ENCODE measurements at regions of chr17 and their contacts with region 1.

Region 1: DNA sequence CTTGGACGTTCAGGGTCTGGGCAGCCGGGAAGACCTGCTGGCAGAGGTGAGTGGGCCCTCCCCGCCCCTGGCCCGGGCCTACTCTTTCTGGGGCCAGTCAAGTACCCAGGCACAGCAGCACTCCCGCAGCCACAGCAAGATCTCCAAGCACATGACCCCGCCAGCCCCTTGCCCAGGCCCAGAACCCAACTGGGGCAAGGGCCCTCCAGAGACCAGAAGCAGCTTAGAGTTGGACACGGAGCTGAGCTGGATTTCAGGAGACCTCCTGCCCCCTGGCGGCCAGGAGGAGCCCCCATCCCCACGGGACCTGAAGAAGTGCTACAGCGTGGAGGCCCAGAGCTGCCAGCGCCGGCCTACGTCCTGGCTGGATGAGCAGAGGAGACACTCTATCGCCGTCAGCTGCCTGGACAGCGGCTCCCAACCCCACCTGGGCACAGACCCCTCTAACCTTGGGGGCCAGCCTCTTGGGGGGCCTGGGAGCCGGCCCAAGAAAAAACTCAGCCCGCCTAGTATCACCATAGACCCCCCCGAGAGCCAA is 8.6 kb upstream of the ABCC3 start:
- DNase-seq: peak; percentile 79 to 90 (median 86)
- H3K4me3 ChIP-seq: no peak overlapping the region
- H3K27ac ChIP-seq: no peak overlapping the region
- H3K4me1 ChIP-seq: peaks cover 0 to 18% (median 12%) of the 10 kb centered on the region in 4 experiments
- H3K27me3 ChIP-seq: peaks cover 0 to 30% (median 10%) of the 10 kb centered on the region in 5 experiments

Region 2: GRCh38 chr17:50297407-50297865 is 328.7 kb before region 1 on chr17:
- CTCF ChIA-PET with region 1: no interaction called
- POLR2A ChIA-PET with region 1: no interaction called
- DNase-seq: peak; percentile 67 to 81 (median 77)
- H3K4me3 ChIP-seq: no peak overlapping the region
- H3K27ac ChIP-seq: no peak overlapping the region
- H3K4me1 ChIP-seq: peaks cover 0 to 10% (median under 1%) of the 10 kb centered on the region in 4 experiments
- H3K27me3 ChIP-seq: no peaks in the 10 kb centered on the region

Region 3: DNA sequence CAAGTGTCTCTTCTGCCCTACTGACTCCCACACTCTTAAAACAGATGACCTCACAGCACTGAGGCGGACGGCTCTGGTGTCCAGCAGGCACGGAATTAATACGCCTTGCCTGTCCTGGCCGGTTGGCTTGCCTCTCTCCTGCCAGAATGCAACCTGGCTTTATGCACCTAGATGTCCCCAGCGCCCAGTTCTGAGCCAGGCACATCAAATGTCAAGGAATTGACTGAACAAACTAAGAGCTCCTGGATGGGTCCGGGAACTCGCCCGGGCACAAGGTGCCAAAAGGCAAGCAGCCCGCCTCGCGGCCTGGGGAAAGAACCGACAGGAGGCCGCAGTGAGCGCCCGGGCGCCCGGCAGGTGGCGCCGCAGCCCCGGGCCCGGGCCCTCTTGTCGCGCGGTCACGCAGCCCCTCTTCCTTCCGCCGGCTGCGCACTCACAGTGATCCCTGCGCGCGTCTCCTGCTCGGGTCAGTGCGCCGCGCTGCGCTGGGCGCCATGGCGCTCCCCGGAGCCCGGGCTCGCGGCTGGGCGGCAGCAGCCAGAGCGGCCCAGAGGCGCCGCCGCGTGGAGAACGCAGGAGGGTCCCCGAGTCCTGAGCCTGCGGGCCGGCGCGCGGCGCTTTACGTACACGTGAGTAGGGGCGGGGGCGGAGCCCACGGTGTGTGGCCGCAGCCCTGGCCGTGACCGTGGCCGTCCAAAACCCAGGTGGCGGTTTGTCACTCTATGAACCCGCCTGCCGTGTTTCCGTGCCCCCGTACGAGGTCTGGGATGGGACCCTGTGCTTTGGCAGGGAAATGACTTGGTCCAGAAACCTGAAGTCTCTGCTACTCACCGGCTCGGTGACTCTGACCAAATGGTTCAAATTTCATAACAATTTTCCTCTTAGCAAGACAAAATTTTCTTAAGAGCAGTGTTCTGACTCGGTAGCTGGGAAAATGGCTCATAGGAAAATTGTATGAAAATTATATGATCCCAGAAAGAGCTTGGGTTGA is 147.4 kb before region 1 on chr17 and contains the start of gene RSAD1:
- CTCF ChIA-PET with region 1: interaction called, 18 read pairs
- POLR2A ChIA-PET with region 1: no interaction called
- DNase-seq: peak; percentile 93 to 96 (median 95)
- H3K4me3 ChIP-seq: peak within 1 kb of the TSS; percentile 86 to 94 (median 90)
- H3K27ac ChIP-seq: peak within 1 kb of the TSS; percentile 7 to 85
- H3K4me1 ChIP-seq: peaks cover 0 to 21% (median 18%) of the 10 kb centered on the region in 4 experiments
- H3K27me3 ChIP-seq: peaks cover 0 to 4% (median 0%) of the 10 kb centered on the region in 5 experiments

Region 4: DNA sequence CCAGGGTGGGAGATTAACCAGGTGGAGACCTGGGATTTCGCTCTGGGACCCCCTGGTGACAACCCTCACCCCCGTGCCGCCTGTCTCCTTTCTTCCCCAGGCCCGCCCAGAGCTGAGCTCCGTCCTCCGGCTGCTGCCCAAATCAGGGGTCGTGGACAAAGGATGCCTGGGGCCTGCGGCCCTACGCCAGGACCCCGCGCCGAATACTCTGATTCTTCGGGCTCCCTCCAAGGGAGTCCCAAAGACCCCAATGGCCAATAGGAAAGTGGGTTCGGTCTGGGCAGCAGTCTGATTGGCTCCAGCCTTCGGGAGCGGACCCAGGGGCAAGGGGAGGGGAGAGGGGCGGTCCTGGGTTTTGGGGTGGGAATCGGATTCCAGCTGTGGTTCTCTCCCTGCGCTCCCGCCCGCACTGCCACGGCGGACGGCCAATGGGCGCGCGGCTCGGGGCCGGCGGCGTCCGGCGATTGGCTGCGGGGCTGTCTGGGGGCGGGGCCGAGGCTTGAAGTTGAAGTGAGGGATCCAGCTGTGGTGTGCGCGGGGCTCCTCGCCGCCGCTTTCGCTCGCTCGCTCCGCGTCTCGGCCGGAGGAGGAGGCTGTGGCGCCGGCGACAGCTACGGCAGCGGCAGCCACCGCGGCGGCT is 65.8 kb before region 1 on chr17 and contains the start of gene CACNA1G:
- CTCF ChIA-PET with region 1: interaction called, 325 read pairs
- POLR2A ChIA-PET with region 1: no interaction called
- DNase-seq: peak; percentile 82 to 89 (median 86)
- H3K4me3 ChIP-seq: peak within 1 kb of the TSS in 6 of 7 experiments; percentile 28 to 72 (median 47)
- H3K27ac ChIP-seq: no peak within 1 kb of the TSS
- H3K4me1 ChIP-seq: peaks cover 0 to 44% (median 38%) of the 10 kb centered on the region in 4 experiments
- H3K27me3 ChIP-seq: peaks cover 0 to 83% (median 39%) of the 10 kb centered on the region in 5 experiments

Region 5: DNA sequence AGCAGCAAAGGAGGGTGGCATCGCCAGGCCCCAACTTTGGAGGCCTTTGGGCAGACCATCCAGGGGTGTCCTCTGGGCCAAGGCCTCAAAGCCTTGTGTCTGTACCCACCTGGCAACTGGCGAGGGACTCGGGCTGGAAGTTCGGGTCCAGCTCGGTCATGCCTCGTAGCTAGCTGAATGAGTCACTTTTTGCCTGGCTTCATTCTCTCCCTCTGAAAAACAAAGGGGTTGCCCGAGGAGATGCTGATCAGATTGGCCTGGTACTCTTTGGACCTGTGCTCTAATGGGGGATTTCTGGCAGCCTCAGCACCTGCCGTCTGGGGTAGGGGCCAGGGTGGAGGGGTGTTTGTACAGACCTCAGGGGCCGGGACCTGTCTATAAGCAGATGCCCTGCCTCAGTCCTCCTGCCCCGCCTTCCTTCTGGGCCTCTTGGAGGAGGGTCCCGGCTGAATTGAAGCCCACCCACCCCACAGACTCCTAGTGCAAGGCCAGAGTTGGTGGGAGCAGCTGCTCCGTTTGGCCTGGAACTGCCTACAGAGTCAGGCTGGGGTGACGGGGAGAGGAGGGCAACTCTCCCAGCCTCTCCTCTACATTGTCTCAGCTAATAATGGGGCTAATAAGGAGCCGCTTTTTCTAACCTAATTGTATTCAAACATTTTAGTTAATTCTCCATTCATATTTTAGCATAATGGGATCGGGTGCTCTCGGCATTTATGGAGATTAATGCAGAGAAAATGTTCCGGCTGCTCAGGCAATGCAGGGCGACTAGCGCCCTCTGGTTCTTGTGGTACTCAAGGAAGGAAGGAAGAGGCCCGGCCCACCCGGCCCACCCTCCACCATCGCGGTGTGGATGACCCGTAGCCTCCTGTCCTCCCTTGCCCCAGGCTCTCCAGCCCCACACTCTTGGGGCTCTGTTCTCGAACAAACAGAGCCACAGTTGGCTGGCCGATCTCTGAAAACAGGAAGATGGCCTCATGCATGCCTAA is 12.8 kb before region 1 on chr17:
- CTCF ChIA-PET with region 1: interaction called, 26 read pairs
- POLR2A ChIA-PET with region 1: no interaction called
- DNase-seq: peak in 2 of 3 donors; percentile 37 to 39
- H3K4me3 ChIP-seq: peak overlapping the region in 2 of 7 experiments; percentile 13 to 39
- H3K27ac ChIP-seq: no peak overlapping the region
- H3K4me1 ChIP-seq: peaks cover 0 to 21% (median 16%) of the 10 kb centered on the region in 4 experiments
- H3K27me3 ChIP-seq: peaks cover 0 to 2% (median 0%) of the 10 kb centered on the region in 5 experiments

Region 6: DNA sequence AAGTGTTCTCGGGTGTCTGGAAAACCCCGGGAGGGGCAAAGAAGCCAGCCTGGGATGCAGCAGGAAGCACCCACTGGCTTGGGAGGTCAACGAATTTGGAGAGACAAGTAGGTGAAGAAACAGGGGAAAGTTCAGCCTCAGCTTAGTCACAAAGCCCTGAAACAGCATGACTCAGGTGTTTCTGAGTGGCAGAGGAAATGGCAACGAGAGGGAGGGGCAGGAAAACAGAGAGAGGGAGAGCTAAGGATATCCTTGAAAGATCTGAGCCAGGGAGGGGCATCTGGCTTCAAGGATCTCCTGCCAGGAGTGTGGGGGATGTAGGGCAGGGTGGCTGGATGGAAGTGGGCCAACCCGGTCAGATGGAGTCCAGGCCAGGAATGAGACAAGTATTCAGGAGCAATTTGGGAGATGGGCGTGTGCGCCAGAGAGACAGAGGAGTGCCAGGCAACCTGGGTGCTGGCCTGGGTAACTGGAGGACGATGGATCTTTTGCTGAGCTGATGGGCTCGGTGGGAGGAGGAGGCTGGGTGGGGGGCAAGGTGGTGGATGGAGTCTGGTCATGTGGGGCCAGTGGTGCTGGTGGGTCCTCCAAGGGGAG is 35.8 kb after region 1 on chr17:
- CTCF ChIA-PET with region 1: interaction called, 18 read pairs
- POLR2A ChIA-PET with region 1: no interaction called
- DNase-seq: peak; percentile 72 to 89 (median 88)
- H3K4me3 ChIP-seq: peak overlapping the region in 3 of 7 experiments; percentile 0 to 45 (median 26)
- H3K27ac ChIP-seq: peak overlapping the region in 1 of 2 experiments; percentile 52
- H3K4me1 ChIP-seq: peaks cover 0 to 48% (median 26%) of the 10 kb centered on the region in 4 experiments
- H3K27me3 ChIP-seq: no peaks in the 10 kb centered on the region

Region 7: DNA sequence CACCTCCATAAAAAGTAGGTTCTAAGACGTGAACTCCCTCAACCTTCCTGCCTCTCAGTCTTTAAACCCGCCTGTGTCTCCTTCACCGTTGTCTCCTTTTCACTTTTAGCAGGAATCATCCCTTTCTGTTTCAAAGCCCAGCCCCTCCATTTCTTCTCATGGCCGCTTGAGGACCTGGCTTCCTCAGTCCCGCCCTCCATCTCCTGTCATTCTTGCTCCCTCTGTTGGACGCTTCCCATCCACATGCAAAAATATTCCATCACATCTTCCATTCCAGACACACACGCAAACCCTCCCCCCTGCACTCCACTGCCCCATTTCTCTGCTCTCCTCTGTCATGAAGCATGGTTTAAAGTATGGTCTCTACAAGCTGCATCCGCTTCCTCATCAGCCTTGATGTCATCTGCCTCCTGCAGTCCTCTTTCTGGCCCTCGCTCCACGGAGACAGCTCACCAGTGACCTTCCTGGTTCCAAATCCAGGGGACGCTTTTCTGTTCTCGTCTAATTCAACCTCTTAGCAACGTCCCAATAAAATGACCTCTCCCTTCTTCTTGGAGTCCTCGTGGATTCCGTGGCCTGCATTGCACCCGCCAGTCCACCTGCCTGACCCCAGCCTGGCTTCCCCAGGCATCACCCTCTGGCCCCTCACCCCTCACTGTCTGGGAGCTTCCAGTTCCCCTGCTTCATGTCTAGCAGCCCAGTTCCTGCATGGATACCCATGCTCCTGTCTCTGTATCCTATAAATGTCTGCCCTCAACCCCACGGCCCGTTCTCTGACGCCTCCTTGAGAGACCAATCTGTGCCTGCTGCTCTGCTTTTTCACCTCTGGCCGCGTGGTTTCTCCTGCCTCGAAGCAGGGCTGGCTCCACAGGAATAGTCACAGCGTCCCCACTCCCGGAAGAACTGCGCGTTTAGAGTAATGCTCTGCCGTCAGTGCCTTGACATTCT is 55.4 kb after region 1 on chr17:
- CTCF ChIA-PET with region 1: interaction called, 84 read pairs
- POLR2A ChIA-PET with region 1: interaction called, 3 read pairs
- DNase-seq: peak; percentile 72 to 82 (median 80)
- H3K4me3 ChIP-seq: peak overlapping the region in 4 of 7 experiments; percentile 14 to 59 (median 42)
- H3K27ac ChIP-seq: no peak overlapping the region
- H3K4me1 ChIP-seq: peaks cover 0 to 7% (median 3%) of the 10 kb centered on the region in 4 experiments
- H3K27me3 ChIP-seq: peaks cover 0 to 9% (median 0%) of the 10 kb centered on the region in 5 experiments

Region 8: DNA sequence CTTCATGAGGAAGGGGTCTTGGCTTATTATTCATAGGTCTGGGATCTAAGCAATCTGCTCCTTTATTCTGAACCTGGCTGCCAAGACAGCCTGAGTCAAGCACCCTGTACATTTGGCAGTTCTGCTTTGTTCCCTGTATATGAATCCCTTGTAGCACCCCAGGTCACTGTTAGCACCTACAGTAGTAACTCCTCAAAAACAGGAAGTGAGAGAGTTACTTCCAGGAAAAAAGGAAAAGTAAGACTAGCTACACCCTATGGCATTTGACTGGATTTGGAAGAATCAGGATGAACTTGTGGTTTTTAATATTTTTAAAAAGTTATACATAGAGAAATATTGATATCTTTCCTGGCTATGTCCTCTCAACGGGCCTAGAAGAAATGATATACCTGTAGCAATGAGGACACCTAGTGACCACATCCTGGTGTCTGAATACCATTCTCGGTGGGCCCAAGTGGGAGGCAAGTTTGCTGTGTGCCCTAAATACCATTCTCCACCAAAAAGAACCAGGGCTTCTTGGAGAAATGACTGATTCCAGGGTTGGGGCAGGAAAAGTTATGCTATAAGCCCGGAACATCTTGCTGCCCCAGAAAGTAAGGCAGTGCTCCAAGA is 71.7 kb after region 1 on chr17:
- CTCF ChIA-PET with region 1: interaction called, 52 read pairs
- POLR2A ChIA-PET with region 1: interaction called, 3 read pairs
- DNase-seq: no peak
- H3K4me3 ChIP-seq: no peak overlapping the region
- H3K27ac ChIP-seq: no peak overlapping the region
- H3K4me1 ChIP-seq: no peaks in the 10 kb centered on the region
- H3K27me3 ChIP-seq: no peaks in the 10 kb centered on the region

Region 9: GRCh38 chr17:50798424-50799288 is 172.6 kb after region 1 on chr17:
- CTCF ChIA-PET with region 1: no interaction called
- POLR2A ChIA-PET with region 1: no interaction called
- DNase-seq: no peak
- H3K4me3 ChIP-seq: no peak overlapping the region
- H3K27ac ChIP-seq: no peak overlapping the region
- H3K4me1 ChIP-seq: peaks cover 0 to 14% (median 8%) of the 10 kb centered on the region in 4 experiments
- H3K27me3 ChIP-seq: no peaks in the 10 kb centered on the region